PC-9 (cell line): ENCODE measurements at regions of chr19 and their contacts with region 1.

Region 1: DNA sequence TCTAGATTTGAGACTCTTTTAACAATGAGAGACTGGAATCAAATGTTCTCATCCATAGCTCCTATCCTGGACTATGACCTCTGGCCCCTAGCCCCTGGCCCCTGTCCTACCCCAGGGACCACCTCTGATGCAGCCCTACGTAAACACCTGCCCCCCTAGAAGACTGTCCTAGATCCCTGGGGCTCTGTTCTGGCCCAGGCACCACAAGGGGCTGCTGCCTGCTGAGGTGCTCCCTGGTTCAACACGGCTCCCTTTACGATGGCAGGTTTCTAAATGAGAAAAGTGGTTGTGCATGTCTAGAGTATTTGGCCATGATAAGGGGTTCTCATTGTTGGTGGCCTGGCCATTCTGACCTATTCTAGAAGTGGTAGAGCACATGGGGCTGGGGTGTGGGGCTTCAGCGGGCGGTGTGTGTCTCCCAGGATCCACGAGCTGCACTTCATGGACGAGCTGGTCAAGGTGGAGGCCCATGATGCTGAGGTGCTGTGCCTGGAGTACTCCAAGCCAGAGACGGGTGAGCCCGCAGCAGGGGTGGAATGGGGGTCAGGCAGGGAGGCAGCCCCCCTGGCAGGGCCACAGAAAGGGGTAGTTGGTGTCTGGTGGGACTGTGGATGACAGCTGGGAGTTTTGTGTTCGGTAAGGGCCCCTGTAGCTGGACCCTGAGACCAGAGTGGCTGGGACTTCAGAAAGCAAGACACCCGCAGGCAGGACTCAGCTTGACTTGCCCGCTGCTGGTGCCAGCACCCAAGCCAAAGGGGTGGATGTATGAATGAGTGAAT is 26.5 kb upstream of the OVOL3 start:
- DNase-seq: no peak
- H3K4me3 ChIP-seq: no peak overlapping the region
- H3K27ac ChIP-seq: no peak overlapping the region
- H3K4me1 ChIP-seq: no peaks in the 10 kb centered on the region
- H3K27me3 ChIP-seq: no peaks in the 10 kb centered on the region
- CTCF ChIP-seq: no peak

Region 2: GRCh38 chr19:36014029-36014924 is 70.1 kb before region 1 on chr19 and contains the start of gene ALKBH6:
- CTCF ChIA-PET with region 1: no interaction called
- POLR2A ChIA-PET with region 1: interaction called, 10 read pairs
- intact Hi-C with region 1: no loop called
- DNase-seq: peak; percentile 98 to 99
- H3K4me3 ChIP-seq: peak within 1 kb of the TSS; percentile 70
- H3K27ac ChIP-seq: no peak within 1 kb of the TSS
- H3K4me1 ChIP-seq: peaks cover 7% of the 10 kb centered on the region
- H3K27me3 ChIP-seq: no peaks in the 10 kb centered on the region
- CTCF ChIP-seq: no peak
- total RNA-seq, gene ALKBH6: 48.2 and 55.1 TPM in 2 replicates